Common myeloid progenitor, CD34-positive (primary cell): ENCODE measurements at regions of chr17 and their contacts with region 1.

Region 1: GRCh38 chr17:41786227-41787020 is at the start of gene JUP:
- DNase-seq: peak; percentile 99 to 100 (median 99)
- H3K4me3 ChIP-seq: peak within 1 kb of the TSS; percentile 72 to 91 (median 89)
- H3K27ac ChIP-seq: peak within 1 kb of the TSS; percentile 72 to 82
- H3K4me1 ChIP-seq: peaks cover 17 to 83% (median 65%) of the 10 kb centered on the region in 4 experiments
- H3K27me3 ChIP-seq: no peaks in the 10 kb centered on the region

Region 2: GRCh38 chr17:41738077-41738735 is 48.2 kb before region 1 on chr17:
- CTCF ChIA-PET with region 1: interaction called, 10 read pairs
- POLR2A ChIA-PET with region 1: interaction called, 5 read pairs
- DNase-seq: peak; percentile 78 to 85 (median 82)
- H3K4me3 ChIP-seq: no peak overlapping the region
- H3K27ac ChIP-seq: no peak overlapping the region
- H3K4me1 ChIP-seq: peaks cover 0 to 21% (median 18%) of the 10 kb centered on the region in 4 experiments
- H3K27me3 ChIP-seq: peaks cover 0 to 46% (median 16%) of the 10 kb centered on the region in 5 experiments

Region 3: DNA sequence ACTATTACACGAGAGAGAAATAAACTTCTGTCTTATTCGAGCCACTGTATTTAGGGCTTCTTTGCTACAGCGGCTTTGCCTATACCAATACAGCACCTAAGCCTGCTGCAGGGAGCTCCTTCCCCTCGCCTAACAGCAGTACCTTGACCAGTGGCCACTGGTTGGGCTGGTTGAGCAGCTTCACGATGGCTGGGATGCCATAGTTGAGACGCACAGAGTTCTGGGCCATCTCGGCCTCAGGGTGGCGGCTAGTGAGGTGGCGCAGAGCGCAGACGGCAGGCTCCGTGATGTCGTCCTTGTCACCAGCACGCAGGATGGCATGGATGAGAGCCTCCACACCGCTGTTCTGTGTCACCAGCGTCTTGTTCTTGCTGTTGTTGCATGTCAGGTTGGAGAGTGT is 23.6 kb before region 1 on chr17:
- CTCF ChIA-PET with region 1: interaction called, 15 read pairs
- POLR2A ChIA-PET with region 1: interaction called, 28 read pairs
- DNase-seq: no peak
- H3K4me3 ChIP-seq: no peak overlapping the region
- H3K27ac ChIP-seq: no peak overlapping the region
- H3K4me1 ChIP-seq: no peaks in the 10 kb centered on the region
- H3K27me3 ChIP-seq: no peaks in the 10 kb centered on the region

Region 4: DNA sequence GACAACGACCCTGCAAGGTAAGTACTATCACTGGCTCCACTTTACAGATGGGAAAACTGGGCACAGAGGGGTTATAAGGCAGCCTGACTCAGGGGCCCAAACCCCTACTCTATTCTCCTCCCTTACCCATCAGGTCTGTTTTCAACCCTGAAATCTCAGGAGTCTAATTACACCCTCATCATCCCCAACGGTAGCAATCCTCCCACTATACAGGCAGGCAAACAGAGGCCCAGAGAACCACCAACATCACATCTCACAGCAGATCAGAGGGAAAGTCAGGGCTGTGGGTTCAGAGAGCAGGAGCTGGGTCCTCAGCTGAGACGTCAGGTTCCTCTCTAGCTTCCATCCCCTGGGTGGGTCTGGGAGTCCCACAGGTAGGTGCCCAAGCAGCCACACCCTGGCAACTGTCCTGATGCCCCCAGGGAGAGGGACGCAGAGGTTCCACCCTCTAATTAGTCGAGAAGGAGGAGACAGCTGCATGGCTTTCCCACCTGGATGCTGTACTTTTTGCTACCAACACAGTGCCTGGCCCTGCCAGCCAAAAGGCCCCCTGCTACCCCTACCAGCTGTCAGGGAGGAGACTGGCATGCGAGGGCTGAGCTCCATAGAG is 16.3 kb before region 1 on chr17:
- CTCF ChIA-PET with region 1: interaction called, 9 read pairs
- POLR2A ChIA-PET with region 1: interaction called, 28 read pairs
- DNase-seq: no peak
- H3K4me3 ChIP-seq: no peak overlapping the region
- H3K27ac ChIP-seq: no peak overlapping the region
- H3K4me1 ChIP-seq: peaks cover 0 to 20% (median 8%) of the 10 kb centered on the region in 4 experiments
- H3K27me3 ChIP-seq: no peaks in the 10 kb centered on the region

Region 5: DNA sequence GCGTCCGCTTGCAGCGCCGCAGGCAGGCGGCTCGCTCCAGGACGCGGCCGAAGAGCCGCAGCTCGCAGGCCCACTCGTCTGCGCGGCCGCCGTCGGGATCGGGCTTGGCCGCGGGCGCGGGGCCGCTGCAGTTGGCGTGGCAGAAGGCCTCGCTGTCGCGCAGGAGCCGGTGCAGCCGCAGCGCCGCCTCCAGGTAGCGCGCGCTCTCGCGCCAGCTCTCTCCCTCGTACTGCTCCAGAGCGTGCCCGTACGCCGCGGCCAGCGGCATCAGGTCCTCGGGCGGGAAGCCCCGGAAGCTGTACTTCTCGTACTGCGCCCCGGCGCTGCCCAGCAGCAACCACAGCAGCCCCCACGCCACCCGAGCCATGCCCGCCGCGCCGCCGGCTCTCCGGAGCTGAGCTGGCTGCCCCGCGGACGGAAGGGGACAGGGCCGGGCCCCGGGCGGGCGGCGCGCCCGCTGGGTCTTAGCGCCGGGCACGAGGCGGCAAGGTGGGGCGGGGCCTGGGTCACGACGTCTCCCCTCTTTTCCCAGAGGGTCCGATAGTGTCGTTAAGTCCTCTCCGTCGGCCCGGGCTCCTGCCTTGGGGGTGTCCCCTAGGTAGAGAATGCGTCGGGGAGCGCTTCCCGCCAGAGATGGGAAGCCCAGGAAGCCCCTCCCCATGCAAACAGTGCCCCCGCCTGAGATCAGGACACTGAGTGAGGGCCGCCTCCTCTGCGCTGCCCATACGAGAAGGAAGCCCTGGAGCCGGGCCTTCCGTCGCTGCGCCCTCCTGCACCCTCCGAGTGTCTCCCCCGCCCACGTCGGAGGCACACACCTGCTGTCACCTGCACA is 25.3 kb after region 1 on chr17 and contains the start of gene P3H4:
- CTCF ChIA-PET with region 1: interaction called, 13 read pairs
- POLR2A ChIA-PET with region 1: interaction called, 5 read pairs
- DNase-seq: peak; percentile 77 to 85 (median 79)
- H3K4me3 ChIP-seq: peak within 1 kb of the TSS; percentile 46 to 86 (median 73)
- H3K27ac ChIP-seq: no peak within 1 kb of the TSS
- H3K4me1 ChIP-seq: peaks cover 0 to 25% (median 19%) of the 10 kb centered on the region in 4 experiments
- H3K27me3 ChIP-seq: peaks cover 0 to 8% (median 0%) of the 10 kb centered on the region in 5 experiments